Activated T-helper 1 cell treated with anti-CD3 and anti-CD28 coated beads, Interleukin-12 subunit alpha, Interleukin-12 subunit beta, Interleukin-2, Interleukin-4 antibody, amounts not matched to agents 30 ng/mL and 10 ng/mL and 1 ng/mL, durations not matched to agents 14 hours and 24 hours and 36 hours (primary cell): ENCODE measurements at regions of chr13 and their contacts with region 1.

Region 1: GRCh38 chr13:61410669-61411297 is 4.9 kb downstream of the PCDH20 start:
- DNase-seq: no peak
- H3K4me3 Mint-ChIP-seq: no peak overlapping the region
- H3K27ac Mint-ChIP-seq: no peak overlapping the region
- H3K4me1 Mint-ChIP-seq: no peaks in the 10 kb centered on the region
- H3K27me3 Mint-ChIP-seq: peaks cover 20% of the 10 kb centered on the region

Region 2: GRCh38 chr13:60479273-60479672 is 931.5 kb before region 1 on chr13:
- intact Hi-C with region 1: loop called (anchors 10 kb)
- DNase-seq: no peak
- H3K4me3 Mint-ChIP-seq: no peak overlapping the region
- H3K27ac Mint-ChIP-seq: no peak overlapping the region
- H3K4me1 Mint-ChIP-seq: no peaks in the 10 kb centered on the region
- H3K27me3 Mint-ChIP-seq: no peaks in the 10 kb centered on the region

Region 3: DNA sequence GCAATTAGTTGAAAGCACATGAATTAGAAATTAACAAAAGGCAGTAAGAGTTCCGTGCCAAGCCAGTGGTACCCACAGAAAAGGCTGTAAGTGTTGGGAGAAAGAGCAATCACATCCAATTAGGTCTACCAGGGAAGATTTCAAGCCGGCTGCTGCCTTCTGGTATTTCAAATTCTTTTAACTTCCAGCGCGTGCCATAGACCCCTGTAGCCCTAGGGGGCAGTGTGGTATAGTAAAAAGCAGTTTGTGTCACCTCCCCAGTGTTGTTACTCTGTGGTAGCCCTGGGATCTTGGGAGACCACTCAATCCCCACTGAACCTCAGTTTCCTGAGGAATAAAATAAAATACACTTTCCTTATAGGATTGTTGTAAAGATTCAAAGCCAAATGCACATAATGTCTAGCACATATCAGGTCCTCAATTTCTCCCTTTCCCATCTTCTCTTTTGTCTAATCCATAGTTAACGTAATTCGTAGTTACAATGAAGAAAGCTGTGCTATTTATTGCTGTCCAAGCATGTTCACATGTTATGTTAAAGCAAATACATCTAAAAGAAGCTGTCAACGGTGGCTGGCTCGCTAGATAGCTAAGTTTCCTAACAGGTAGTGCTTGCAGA is 783.6 kb before region 1 on chr13:
- intact Hi-C with region 1: loop called (anchors 5 kb)
- DNase-seq: no peak
- H3K4me3 Mint-ChIP-seq: no peak overlapping the region
- H3K27ac Mint-ChIP-seq: no peak overlapping the region
- H3K4me1 Mint-ChIP-seq: no peaks in the 10 kb centered on the region
- H3K27me3 Mint-ChIP-seq: no peaks in the 10 kb centered on the region